Calu3 (cell line): ENCODE measurements at regions of chr4 and their contacts with region 1.

Region 1: GRCh38 chr4:180500154-180500553 is 1743.0 kb upstream of the TENM3 start:
- DNase-seq: no peak
- H3K4me3 Mint-ChIP-seq: no peak overlapping the region
- H3K27ac Mint-ChIP-seq: no peak overlapping the region
- H3K4me1 Mint-ChIP-seq: no peaks in the 10 kb centered on the region
- H3K27me3 Mint-ChIP-seq: no peaks in the 10 kb centered on the region
- CTCF ChIP-seq: no peak

Region 2: DNA sequence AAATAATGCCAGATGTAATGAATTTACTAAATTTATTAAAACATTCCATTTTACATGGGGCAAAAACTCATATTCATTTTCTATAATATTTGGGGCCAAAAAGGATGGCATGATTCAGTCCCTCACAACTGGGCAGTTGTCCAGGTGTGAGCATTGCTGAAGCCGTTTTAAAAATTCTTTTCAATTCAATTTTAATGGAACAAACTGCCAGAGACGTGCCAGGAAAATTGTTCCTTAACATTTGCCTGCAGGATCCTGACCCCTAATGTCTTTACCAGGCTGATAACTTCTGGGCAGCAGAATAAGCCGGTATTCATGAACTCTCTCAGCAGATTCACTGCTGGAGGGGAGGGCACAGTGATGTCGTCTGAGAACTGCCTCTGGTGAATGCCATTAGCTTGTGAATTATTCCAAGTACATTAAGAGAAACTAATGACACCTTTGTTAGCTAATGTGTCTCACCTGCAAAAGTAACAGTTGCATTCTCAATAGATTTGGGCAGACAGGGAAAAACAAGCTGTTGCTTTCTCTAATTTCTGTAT is 298.0 kb after region 1 on chr4:
- CTCF ChIA-PET with region 1: no interaction called
- intact Hi-C with region 1: loop called (anchors 5 kb)
- DNase-seq: no peak
- H3K4me3 Mint-ChIP-seq: no peak overlapping the region
- H3K27ac Mint-ChIP-seq: no peak overlapping the region
- H3K4me1 Mint-ChIP-seq: no peaks in the 10 kb centered on the region
- H3K27me3 Mint-ChIP-seq: no peaks in the 10 kb centered on the region
- CTCF ChIP-seq: no peak